ENCODE measurements at regions of chr5 and their contacts with region 1.

Region 1: GRCh38 chr5:56900858-56901578 is 8.4 kb upstream of the SETD9 start:
- DNase-seq: peak; percentile 22
- H3K4me3 ChIP-seq: no peak overlapping the region
- H3K27ac ChIP-seq: no peak overlapping the region
- H3K4me1 ChIP-seq: no peaks in the 10 kb centered on the region
- H3K27me3 ChIP-seq: no peaks in the 10 kb centered on the region
- CTCF ChIP-seq: peak; percentile 40 to 76 (median 70)
- POLR2A ChIP-seq: no peak

Region 2: GRCh38 chr5:56625541-56625940 is 275.5 kb before region 1 on chr5:
- intact Hi-C with region 1: no loop called
- DNase-seq: no peak
- H3K4me3 ChIP-seq: no peak overlapping the region
- H3K27ac ChIP-seq: no peak overlapping the region
- H3K4me1 ChIP-seq: no peaks in the 10 kb centered on the region
- H3K27me3 ChIP-seq: no peaks in the 10 kb centered on the region
- CTCF ChIP-seq: no peak
- POLR2A ChIP-seq: no peak

Region 3: DNA sequence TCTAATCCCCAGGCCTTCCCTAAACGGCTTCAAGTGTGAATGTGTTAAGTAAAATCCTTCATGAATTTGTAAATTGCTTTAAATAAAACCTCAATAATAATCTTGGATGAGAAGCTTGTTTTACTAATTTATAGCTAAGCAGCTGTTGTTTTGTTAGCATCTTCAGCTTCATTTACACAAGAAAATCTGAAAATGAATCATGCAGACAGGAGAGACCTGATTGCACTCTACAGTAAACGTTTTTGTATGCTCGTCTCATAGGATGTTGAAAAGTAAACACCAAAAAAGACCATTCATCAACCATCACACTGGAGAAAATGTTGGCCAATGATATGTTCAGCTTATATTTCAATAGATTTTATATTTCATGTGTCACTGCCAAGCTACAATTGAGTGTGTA is 126.1 kb before region 1 on chr5:
- intact Hi-C with region 1: no loop called
- DNase-seq: no peak
- H3K4me3 ChIP-seq: no peak overlapping the region
- H3K27ac ChIP-seq: no peak overlapping the region
- H3K4me1 ChIP-seq: no peaks in the 10 kb centered on the region
- H3K27me3 ChIP-seq: no peaks in the 10 kb centered on the region
- CTCF ChIP-seq: no peak
- POLR2A ChIP-seq: no peak

Region 4: DNA sequence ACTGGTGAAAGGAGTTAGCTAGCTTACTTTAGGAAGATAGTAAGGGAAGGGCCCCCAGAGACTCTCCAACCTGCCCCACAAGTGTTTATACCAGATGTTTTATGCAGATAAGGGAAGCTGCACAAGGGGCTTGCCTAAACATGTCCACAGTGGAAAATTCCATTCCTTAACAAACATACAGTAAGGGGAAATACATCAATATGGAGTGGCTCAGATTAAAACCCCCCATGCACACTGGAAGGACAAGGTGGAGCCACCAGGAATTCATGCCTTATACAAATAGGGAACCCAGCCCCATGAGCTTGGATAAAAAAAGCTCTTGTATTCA is 166.5 kb after region 1 on chr5:
- intact Hi-C with region 1: no loop called
- DNase-seq: no peak
- H3K4me3 ChIP-seq: no peak overlapping the region
- H3K27ac ChIP-seq: no peak overlapping the region
- H3K4me1 ChIP-seq: no peaks in the 10 kb centered on the region
- H3K27me3 ChIP-seq: no peaks in the 10 kb centered on the region
- CTCF ChIP-seq: no peak
- POLR2A ChIP-seq: no peak

Region 5: DNA sequence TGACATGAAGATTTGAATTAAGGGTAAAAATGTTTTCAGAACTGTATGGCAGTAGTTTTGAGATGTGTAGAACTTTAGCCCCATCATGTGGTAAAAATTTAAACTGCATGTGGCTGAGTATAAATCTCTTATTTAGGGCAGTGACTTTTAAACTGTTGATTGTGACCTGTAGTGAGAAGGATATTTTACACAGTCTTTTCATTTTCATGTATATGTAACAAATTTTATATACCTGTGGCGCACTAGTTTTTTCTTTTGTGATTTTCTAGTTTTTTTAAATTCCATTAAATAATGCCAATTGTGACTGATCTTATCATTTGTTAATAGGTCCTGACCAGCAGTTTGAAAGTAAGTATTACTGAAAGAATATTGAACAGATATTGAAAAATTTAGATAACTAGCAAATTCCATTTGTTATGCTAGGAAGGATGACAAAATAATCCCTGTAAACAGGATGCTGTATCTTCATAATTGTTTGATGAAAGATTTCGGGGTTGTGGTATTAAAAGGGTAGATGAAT is 320.1 kb after region 1 on chr5:
- intact Hi-C with region 1: loop called (anchors 2 kb)
- DNase-seq: peak; percentile 38
- H3K4me3 ChIP-seq: no peak overlapping the region
- H3K27ac ChIP-seq: no peak overlapping the region
- H3K4me1 ChIP-seq: no peaks in the 10 kb centered on the region
- H3K27me3 ChIP-seq: no peaks in the 10 kb centered on the region
- CTCF ChIP-seq: peak; percentile 61 to 93 (median 84)
- POLR2A ChIP-seq: no peak